Activated CD4-positive, alpha-beta memory T cell treated with anti-CD3 and anti-CD28 coated beads, Interleukin-2, amount 10 ng/mL, durations not matched to agents 7 days and 5 days (primary cell): ENCODE measurements at regions of chr1 and their contacts with region 1.

Region 1: DNA sequence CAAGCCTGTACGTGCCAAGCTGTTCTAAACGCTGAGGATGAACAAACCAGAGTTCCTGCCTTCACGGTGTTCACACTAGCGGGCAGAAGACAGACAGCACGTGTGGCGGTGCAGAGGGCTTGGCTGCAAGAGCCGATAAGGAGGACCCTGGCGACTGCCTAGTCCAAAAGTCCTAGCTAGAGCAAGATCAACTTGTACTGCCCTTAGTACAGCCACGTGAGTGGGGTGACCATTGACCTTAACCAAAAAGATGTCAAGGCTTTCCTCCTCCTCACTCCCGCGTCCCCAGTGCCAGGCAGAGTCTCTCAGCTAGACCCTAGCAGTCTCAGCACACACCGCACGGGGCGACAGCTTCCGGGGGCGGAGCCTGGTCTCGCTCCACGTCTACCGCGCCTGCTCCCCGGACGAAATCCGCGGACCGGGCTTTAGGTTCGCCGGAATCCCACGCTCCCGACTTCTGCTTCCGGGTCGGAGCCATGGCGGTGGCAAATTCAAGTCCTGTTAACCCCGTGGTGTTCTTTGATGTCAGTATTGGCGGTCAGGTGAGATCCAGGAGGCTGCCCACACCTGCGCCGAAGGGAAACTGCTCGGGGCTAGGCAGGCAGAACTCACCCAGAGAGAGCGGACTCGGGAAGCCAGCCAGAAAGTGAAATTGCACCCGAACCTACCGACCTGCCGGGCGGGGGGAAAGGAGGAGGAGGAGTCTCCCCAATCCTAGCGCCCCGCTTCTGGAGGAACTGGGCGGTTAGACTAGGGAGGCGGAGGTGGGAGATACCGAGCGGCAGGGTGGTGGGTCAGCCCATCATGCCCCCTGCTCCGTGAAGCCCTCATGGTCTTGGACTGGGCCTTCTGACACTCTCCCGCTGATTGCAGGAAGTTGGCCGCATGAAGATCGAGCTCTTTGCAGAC is at the start of gene PPIH:
- DNase-seq: peak; percentile 96
- H3K4me3 Mint-ChIP-seq: peak within 1 kb of the TSS; percentile 100
- H3K27ac Mint-ChIP-seq: peak within 1 kb of the TSS; percentile 95
- H3K4me1 Mint-ChIP-seq: peaks cover 49% of the 10 kb centered on the region
- H3K27me3 Mint-ChIP-seq: peaks cover 2% of the 10 kb centered on the region
- total RNA-seq, gene PPIH: 71.3 to 71.4 TPM

Region 2: DNA sequence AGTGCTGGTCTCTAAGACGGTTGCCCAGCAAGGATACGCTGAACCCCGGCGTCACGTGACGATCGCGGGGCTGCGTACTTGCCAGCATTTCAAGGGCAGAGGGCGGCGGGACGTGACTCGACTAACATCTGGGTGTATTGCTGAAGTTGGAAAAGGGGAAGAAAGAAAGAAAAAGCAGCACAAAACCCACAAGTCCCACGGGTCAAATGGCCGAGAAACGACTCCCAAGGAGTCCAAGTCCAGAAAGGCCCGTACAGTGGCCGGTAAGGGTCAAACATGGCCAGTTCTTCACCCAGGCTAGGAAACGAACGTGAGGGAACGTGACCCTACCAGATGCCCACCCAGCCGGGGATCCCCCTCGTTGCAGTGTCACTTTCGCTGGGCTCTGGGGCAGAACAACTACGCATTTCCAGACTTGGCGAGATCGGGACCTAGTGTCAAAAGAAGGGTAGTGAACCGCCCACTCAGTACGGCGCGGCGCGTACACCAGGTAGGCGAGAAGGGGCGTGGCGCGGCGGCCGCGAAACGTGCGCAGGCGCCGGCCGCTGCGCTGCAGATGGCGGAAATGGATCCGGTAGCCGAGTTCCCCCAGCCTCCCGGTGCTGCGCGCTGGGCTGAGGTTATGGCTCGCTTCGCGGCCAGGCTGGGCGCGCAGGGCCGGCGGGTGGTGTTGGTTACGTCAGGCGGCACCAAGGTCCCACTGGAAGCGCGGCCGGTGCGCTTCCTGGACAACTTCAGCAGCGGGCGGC is 202.0 kb before region 1 on chr1 and contains the starts of genes PPCS and ZMYND12:
- CTCF ChIA-PET with region 1: no interaction called
- POLR2A ChIA-PET with region 1: interaction called, 11 read pairs
- DNase-seq: peak; percentile 90
- H3K4me3 Mint-ChIP-seq: peak within 1 kb of the TSS; percentile 91
- H3K27ac Mint-ChIP-seq: peak within 1 kb of the TSS; percentile 94
- H3K4me1 Mint-ChIP-seq: peaks cover 41% of the 10 kb centered on the region
- H3K27me3 Mint-ChIP-seq: peaks cover 1% of the 10 kb centered on the region
- total RNA-seq, gene PPCS: 46.8 to 48.4 TPM
- total RNA-seq, gene ZMYND12: 0.96 to 1.3 TPM

Region 3: GRCh38 chr1:42681741-42682483 is 23.7 kb after region 1 on chr1 and contains the start of gene YBX1:
- CTCF ChIA-PET with region 1: interaction called, 13 read pairs
- POLR2A ChIA-PET with region 1: interaction called, 209 read pairs
- DNase-seq: peak; percentile 96
- H3K4me3 Mint-ChIP-seq: peak within 1 kb of the TSS; percentile 97
- H3K27ac Mint-ChIP-seq: peak within 1 kb of the TSS; percentile 96
- H3K4me1 Mint-ChIP-seq: peaks cover 48% of the 10 kb centered on the region
- H3K27me3 Mint-ChIP-seq: no peaks in the 10 kb centered on the region
- total RNA-seq, gene YBX1: 575 to 580 TPM

Region 4: GRCh38 chr1:42690477-42691156 is 32.4 kb after region 1 on chr1:
- CTCF ChIA-PET with region 1: interaction called, 3 read pairs
- POLR2A ChIA-PET with region 1: interaction called, 209 read pairs
- DNase-seq: no peak
- H3K4me3 Mint-ChIP-seq: no peak overlapping the region
- H3K27ac Mint-ChIP-seq: peak overlapping the region; percentile 13
- H3K4me1 Mint-ChIP-seq: peaks cover 83% of the 10 kb centered on the region
- H3K27me3 Mint-ChIP-seq: no peaks in the 10 kb centered on the region

Region 5: DNA sequence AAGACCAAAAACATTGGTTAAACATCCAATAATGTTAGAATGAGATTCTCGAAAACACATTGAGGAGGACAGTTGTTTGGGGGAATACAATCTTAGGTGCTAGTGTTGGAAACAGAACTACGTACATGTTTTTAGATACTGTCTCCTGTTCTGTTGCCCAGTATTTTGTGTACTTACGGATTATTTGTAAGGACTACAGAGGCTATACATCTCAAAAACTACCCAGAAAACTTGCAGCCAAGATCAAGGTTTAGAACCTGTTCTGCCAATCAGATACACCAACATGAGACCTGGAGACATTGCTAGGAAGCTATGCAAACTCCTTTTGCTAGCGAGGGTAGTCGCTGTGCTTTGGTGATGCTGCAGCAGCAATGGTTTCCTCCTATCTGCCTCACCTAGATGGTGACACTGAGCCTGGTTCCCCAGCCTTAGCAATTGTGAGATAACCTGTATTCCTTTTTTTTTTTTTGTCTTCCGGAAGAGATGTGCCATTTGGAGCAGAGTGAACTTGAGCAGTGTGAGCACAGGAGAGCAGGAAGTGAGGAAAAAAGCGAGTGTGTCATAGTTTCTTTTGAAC is 45.8 kb after region 1 on chr1:
- CTCF ChIA-PET with region 1: no interaction called
- POLR2A ChIA-PET with region 1: no interaction called
- DNase-seq: no peak
- H3K4me3 Mint-ChIP-seq: no peak overlapping the region
- H3K27ac Mint-ChIP-seq: no peak overlapping the region
- H3K4me1 Mint-ChIP-seq: no peaks in the 10 kb centered on the region
- H3K27me3 Mint-ChIP-seq: no peaks in the 10 kb centered on the region

Region 6: GRCh38 chr1:42736150-42736850 is 78.1 kb after region 1 on chr1:
- CTCF ChIA-PET with region 1: no interaction called
- POLR2A ChIA-PET with region 1: no interaction called
- DNase-seq: no peak
- H3K4me3 Mint-ChIP-seq: no peak overlapping the region
- H3K27ac Mint-ChIP-seq: no peak overlapping the region
- H3K4me1 Mint-ChIP-seq: peaks cover 9% of the 10 kb centered on the region
- H3K27me3 Mint-ChIP-seq: no peaks in the 10 kb centered on the region